ENCODE measurements at regions of chr12 and their contacts with region 1.

Region 1: DNA sequence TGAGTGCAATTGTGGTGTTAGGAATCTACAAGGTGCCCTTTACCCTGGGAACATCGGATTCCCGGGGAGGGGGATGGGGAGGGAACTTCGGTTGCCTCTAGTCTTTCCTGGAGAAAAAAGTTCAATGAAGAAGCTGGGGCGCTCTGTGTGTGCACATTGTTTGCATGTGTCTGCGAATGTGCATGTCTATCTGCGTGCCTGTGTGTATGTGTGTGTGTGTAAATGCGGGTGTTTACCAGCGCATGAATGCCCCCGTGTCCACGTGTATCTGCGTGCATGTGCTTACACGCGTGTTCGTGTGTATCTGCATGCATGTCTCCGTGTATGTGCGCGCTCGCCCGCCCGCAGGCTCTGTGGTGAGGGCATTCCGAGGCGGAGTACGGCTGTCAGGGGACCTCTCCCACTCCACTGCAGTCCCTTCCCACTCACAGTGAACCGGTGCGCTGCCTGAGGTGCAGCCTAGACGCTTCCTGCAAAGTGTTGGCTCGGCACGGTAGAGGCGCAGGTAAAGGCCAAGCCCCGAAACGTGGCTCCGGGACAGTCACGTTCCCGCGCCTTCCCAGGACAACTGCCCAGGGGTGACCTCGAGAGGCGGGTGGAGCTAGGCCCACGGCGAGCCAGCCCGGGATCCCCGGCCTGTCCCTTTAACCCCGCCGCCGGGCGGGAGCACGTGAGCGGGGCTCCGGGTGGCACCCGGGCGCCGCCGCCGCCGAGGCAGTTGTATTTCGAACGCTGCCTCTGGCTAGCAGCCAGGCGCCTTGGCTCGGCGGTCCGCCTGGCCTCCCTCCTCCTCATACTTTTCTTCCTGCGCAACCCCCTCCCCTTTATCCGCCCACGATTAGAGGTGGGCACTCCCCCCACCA is 539 bp upstream of the HMGA2 start:
- DNase-seq: peak; percentile 54 to 61
- H3K4me3 ChIP-seq: peak overlapping the region; percentile 93
- H3K27ac ChIP-seq: peak overlapping the region; percentile 88
- H3K4me1 ChIP-seq: peaks cover 49% of the 10 kb centered on the region
- H3K27me3 ChIP-seq: no peaks in the 10 kb centered on the region
- CTCF ChIP-seq: no peak

Region 2: GRCh38 chr12:65313719-65314317 is 509.9 kb before region 1 on chr12:
- CTCF ChIA-PET with region 1: no interaction called
- POLR2A ChIA-PET with region 1: no interaction called
- intact Hi-C with region 1: loop called (anchors 5 kb)
- DNase-seq: no peak
- H3K4me3 ChIP-seq: no peak overlapping the region
- H3K27ac ChIP-seq: no peak overlapping the region
- H3K4me1 ChIP-seq: no peaks in the 10 kb centered on the region
- H3K27me3 ChIP-seq: no peaks in the 10 kb centered on the region
- CTCF ChIP-seq: peak; percentile 76

Region 3: GRCh38 chr12:65631621-65632111 is 192.1 kb before region 1 on chr12:
- CTCF ChIA-PET with region 1: no interaction called
- POLR2A ChIA-PET with region 1: no interaction called
- intact Hi-C with region 1: loop called (anchors 10 kb)
- DNase-seq: peak; percentile 66 to 100
- H3K4me3 ChIP-seq: peak overlapping the region; percentile 16; the same call in 1 of the 2 replicates
- H3K27ac ChIP-seq: peak overlapping the region; percentile 99
- H3K4me1 ChIP-seq: peaks cover 72% of the 10 kb centered on the region
- H3K27me3 ChIP-seq: no peaks in the 10 kb centered on the region
- CTCF ChIP-seq: no peak

Region 4: DNA sequence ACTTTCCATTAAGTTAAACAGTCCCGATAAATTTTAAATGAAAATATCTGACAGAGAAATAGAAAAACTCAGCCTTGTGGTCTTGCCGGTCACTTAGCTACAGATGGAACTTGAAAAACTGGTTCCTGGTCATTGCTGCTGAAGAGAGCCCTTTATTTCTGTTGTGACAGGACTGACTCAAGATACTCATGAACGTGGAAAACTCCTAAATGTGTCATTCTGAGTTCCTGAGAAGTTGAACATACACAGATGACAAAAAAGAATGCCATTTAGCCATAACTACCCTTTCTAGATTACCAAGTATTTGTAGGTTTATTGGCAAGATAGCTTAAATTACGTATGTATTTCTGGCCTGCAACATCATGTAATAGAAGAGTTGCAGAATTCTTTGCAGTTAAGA is 134.7 kb after region 1 on chr12:
- CTCF ChIA-PET with region 1: no interaction called
- POLR2A ChIA-PET with region 1: no interaction called
- intact Hi-C with region 1: loop called (anchors 1 kb)
- DNase-seq: peak; percentile 35 to 93
- H3K4me3 ChIP-seq: no peak overlapping the region
- H3K27ac ChIP-seq: peak overlapping the region; percentile 38
- H3K4me1 ChIP-seq: peaks cover 36% of the 10 kb centered on the region
- H3K27me3 ChIP-seq: no peaks in the 10 kb centered on the region
- CTCF ChIP-seq: no peak

Region 5: DNA sequence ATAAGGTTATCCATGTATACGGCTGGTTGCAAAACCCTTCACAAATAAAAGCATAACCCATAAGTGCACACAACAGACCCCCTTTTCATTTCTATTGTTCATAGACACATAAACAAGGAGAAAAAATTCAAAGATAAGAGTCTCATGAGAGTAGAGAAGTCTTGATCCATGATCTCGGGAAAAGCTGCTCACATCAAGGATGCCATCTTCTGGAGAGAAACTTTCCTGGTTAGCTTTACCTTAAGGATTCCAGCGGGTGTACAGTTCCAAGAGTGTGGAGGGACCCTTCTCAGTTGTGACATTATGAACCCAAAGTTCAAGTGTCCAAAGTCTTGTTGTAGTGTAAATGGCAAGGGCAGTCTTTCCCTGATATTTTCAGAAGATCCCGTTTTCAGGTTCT is 162.3 kb after region 1 on chr12:
- CTCF ChIA-PET with region 1: no interaction called
- POLR2A ChIA-PET with region 1: no interaction called
- intact Hi-C with region 1: loop called (anchors 5 kb)
- DNase-seq: peak in 1 of 2 experiments; percentile 32
- H3K4me3 ChIP-seq: no peak overlapping the region
- H3K27ac ChIP-seq: no peak overlapping the region
- H3K4me1 ChIP-seq: no peaks in the 10 kb centered on the region
- H3K27me3 ChIP-seq: no peaks in the 10 kb centered on the region
- CTCF ChIP-seq: no peak

Measured in PC-9 (cell line).